SK-N-SH (cell line): ENCODE measurements at regions of chr4 and their contacts with region 1.

Region 1: GRCh38 chr4:74228691-74229640 is 71.0 kb downstream of the MTHFD2L start:
- DNase-seq: peak; percentile 30
- H3K4me3 ChIP-seq: peak overlapping the region in 1 of 2 experiments; percentile 35; a peak in 1 of 4 replicates
- H3K27ac ChIP-seq: no peak overlapping the region
- H3K4me1 ChIP-seq: no peaks in the 10 kb centered on the region; a peak in 1 of 4 replicates
- H3K27me3 ChIP-seq: no peaks in the 10 kb centered on the region
- CTCF ChIP-seq: peak; percentile 96
- EP300 ChIP-seq: no peak
- RAD21 ChIP-seq: peak; percentile 68

Region 2: GRCh38 chr4:74217365-74217764 is 11.6 kb before region 1 on chr4:
- CTCF ChIA-PET with region 1: interaction called, 18 read pairs
- POLR2A ChIA-PET with region 1: interaction called, 3 read pairs
- DNase-seq: no peak
- H3K4me3 ChIP-seq: no peak overlapping the region
- H3K27ac ChIP-seq: no peak overlapping the region
- H3K4me1 ChIP-seq: no peaks in the 10 kb centered on the region
- H3K27me3 ChIP-seq: no peaks in the 10 kb centered on the region
- CTCF ChIP-seq: no peak
- EP300 ChIP-seq: no peak
- RAD21 ChIP-seq: no peak

Region 3: GRCh38 chr4:74244049-74244448 is 15.1 kb after region 1 on chr4:
- CTCF ChIA-PET with region 1: interaction called, 19 read pairs
- POLR2A ChIA-PET with region 1: no interaction called
- DNase-seq: no peak
- H3K4me3 ChIP-seq: no peak overlapping the region
- H3K27ac ChIP-seq: no peak overlapping the region
- H3K4me1 ChIP-seq: no peaks in the 10 kb centered on the region
- H3K27me3 ChIP-seq: no peaks in the 10 kb centered on the region
- CTCF ChIP-seq: no peak
- EP300 ChIP-seq: no peak
- RAD21 ChIP-seq: no peak

Region 4: GRCh38 chr4:74252933-74253332 is 24.0 kb after region 1 on chr4:
- CTCF ChIA-PET with region 1: interaction called, 17 read pairs
- POLR2A ChIA-PET with region 1: no interaction called
- DNase-seq: no peak
- H3K4me3 ChIP-seq: no peak overlapping the region
- H3K27ac ChIP-seq: no peak overlapping the region
- H3K4me1 ChIP-seq: no peaks in the 10 kb centered on the region
- H3K27me3 ChIP-seq: no peaks in the 10 kb centered on the region
- CTCF ChIP-seq: no peak
- EP300 ChIP-seq: no peak
- RAD21 ChIP-seq: no peak

Region 5: DNA sequence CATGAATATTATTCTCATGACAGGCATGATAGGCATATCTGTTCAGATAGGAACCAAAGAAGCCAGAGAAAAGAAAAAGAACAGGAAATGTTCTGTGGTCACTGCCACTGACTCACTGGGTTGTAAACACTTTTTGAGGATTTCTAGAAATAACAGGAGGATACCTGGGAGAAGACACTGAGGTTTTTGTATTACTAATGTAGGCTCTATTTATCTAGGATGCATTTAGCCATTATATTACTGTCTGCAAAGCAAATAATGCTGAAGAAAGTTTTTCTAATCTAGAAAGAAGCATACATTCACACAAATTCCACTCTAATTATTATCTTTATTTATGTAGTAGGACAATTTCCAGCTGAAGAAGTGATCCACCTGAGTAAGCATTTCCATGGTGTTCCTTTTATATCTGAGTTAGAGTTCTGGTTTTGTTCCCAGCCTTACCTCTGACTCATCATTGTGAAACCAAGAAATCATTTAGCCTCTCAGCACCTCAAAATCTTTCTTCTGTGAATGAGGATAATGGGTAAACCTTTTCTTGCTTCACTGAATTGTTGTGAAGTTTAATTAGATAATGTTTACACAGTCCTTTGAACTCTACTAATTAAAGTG is 39.1 kb after region 1 on chr4:
- CTCF ChIA-PET with region 1: interaction called, 15 read pairs
- POLR2A ChIA-PET with region 1: no interaction called
- DNase-seq: no peak
- H3K4me3 ChIP-seq: no peak overlapping the region
- H3K27ac ChIP-seq: no peak overlapping the region
- H3K4me1 ChIP-seq: no peaks in the 10 kb centered on the region
- H3K27me3 ChIP-seq: no peaks in the 10 kb centered on the region
- CTCF ChIP-seq: no peak
- EP300 ChIP-seq: no peak
- RAD21 ChIP-seq: no peak

Region 6: GRCh38 chr4:74311696-74312313 is 82.8 kb after region 1 on chr4:
- CTCF ChIA-PET with region 1: interaction called, 17 read pairs
- POLR2A ChIA-PET with region 1: no interaction called
- DNase-seq: peak; percentile 7
- H3K4me3 ChIP-seq: no peak overlapping the region; a peak in 1 of 4 replicates
- H3K27ac ChIP-seq: no peak overlapping the region
- H3K4me1 ChIP-seq: no peaks in the 10 kb centered on the region; a peak in 1 of 4 replicates
- H3K27me3 ChIP-seq: peaks cover 5% of the 10 kb centered on the region; the same call in 1 of the 2 replicates
- CTCF ChIP-seq: peak; percentile 79
- EP300 ChIP-seq: no peak
- RAD21 ChIP-seq: peak; percentile 84

Region 7: DNA sequence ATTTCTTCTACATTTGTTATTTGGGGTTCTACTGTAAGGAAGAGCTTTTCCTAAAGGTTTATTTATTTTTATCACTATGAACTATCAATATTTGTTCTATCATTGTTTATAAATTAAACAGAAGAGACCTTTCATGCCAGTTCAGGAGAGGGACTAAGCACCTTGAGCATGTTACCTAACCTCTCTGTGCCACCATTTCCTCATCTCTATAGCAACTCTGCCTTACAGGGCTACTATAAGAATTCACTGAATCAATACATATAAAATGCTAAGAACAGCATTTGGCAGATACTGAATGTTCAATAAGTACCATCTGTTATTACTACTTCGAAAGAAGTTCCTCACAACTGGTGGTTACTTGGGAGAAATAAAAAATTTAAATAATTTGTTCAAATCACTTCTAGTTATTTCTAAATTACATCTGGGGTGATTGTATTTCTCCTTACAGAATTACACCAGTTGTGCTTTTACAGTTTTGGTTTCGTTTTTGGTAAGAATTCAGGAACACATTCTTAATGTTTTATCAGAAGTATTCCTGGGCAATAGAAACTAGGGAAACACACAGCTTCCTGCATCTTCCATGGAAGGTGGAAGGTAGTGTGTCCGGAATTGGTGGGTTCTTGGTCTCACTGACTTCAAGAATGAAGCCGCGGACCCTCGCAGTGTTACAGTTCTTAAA is 168.9 kb after region 1 on chr4:
- CTCF ChIA-PET with region 1: no interaction called
- POLR2A ChIA-PET with region 1: no interaction called
- DNase-seq: no peak
- H3K4me3 ChIP-seq: peak overlapping the region; percentile 45 to 63
- H3K27ac ChIP-seq: no peak overlapping the region
- H3K4me1 ChIP-seq: no peaks in the 10 kb centered on the region; a peak in 1 of 4 replicates
- H3K27me3 ChIP-seq: peaks cover 8% of the 10 kb centered on the region
- CTCF ChIP-seq: no peak
- EP300 ChIP-seq: no peak
- RAD21 ChIP-seq: no peak

Region 8: GRCh38 chr4:74516321-74516720 is 287.4 kb after region 1 on chr4:
- CTCF ChIA-PET with region 1: no interaction called
- POLR2A ChIA-PET with region 1: no interaction called
- DNase-seq: no peak
- H3K4me3 ChIP-seq: no peak overlapping the region
- H3K27ac ChIP-seq: no peak overlapping the region
- H3K4me1 ChIP-seq: no peaks in the 10 kb centered on the region
- H3K27me3 ChIP-seq: peaks cover 13% of the 10 kb centered on the region
- CTCF ChIP-seq: no peak
- EP300 ChIP-seq: no peak
- RAD21 ChIP-seq: no peak